Activated CD4-positive, alpha-beta T cell treated with anti-CD3 and anti-CD28 coated beads, Interleukin-2, amount 10 ng/mL, durations not matched to agents 24 days and 14 days (primary cell): ENCODE measurements at regions of chr4 and their contacts with region 1.

Region 1: GRCh38 chr4:127965062-127965802 is at the starts of genes ABHD18 and MFSD8:
- DNase-seq: peak; percentile 100
- H3K4me3 Mint-ChIP-seq: peak within 1 kb of the TSS; percentile 97
- H3K27ac Mint-ChIP-seq: peak within 1 kb of the TSS; percentile 97
- H3K4me1 Mint-ChIP-seq: peaks cover 31% of the 10 kb centered on the region
- H3K27me3 Mint-ChIP-seq: peaks cover 2% of the 10 kb centered on the region
- total RNA-seq, gene ABHD18: 17.3 and 18.5 TPM in 2 replicates
- total RNA-seq, gene MFSD8: 21.5 and 21.8 TPM in 2 replicates

Region 2: GRCh38 chr4:127782274-127783025 is 182.8 kb before region 1 on chr4 and contains the start of gene HSPA4L:
- intact Hi-C with region 1: loop called (anchors 1 kb)
- DNase-seq: peak; percentile 89
- H3K4me3 Mint-ChIP-seq: peak within 1 kb of the TSS; percentile 94
- H3K27ac Mint-ChIP-seq: peak within 1 kb of the TSS; percentile 91
- H3K4me1 Mint-ChIP-seq: peaks cover 18% of the 10 kb centered on the region
- H3K27me3 Mint-ChIP-seq: peaks cover 72% of the 10 kb centered on the region
- total RNA-seq, gene HSPA4L: 1.3 and 1.7 TPM in 2 replicates

Region 3: DNA sequence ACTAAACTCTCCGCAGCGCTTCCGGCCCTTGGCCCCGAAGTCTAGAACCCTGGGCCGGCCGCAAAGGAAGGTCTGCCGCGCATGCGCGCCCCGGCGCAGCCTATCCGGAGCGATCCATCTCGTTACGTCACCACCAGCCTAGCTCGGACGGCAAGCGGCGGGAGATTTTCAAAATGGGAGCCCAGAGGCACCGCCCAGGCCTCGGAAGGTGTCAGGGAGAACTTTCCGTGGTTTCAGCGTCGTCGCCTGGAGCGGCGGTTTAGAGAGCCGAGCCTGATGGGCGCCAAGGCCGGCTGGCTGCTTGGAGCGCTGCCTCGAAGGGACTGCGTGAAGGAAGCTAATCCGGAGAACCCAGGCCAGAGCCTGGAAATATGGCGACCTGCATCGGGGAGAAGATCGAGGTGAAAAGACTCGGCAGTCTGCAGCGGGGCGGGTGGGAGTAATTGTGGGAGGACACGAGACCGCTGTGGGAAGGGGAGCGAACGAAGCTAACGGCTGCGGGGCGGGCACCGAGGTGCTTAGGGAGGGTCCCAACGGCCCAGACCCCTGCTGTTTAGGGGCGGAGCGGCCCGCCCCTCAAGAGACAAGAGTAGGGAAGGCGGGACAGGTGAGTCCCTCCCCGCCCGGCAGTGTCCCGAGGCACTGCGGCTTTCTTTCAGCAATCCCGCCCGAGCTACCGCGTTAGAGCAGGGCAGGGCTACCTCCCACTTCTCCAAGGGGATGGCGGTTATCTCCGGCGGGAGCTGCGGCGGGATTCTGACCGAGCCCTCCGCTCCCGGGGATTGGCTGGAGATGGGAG is 84.3 kb before region 1 on chr4 and contains the start of gene PLK4:
- intact Hi-C with region 1: loop called (anchors 1 kb)
- DNase-seq: peak; percentile 99
- H3K4me3 Mint-ChIP-seq: peak within 1 kb of the TSS; percentile 97
- H3K27ac Mint-ChIP-seq: peak within 1 kb of the TSS; percentile 93
- H3K4me1 Mint-ChIP-seq: peaks cover 25% of the 10 kb centered on the region
- H3K27me3 Mint-ChIP-seq: peaks cover 2% of the 10 kb centered on the region
- total RNA-seq, gene PLK4: 44.5 and 44.7 TPM in 2 replicates

Region 4: GRCh38 chr4:127905029-127905428 is 60.2 kb before region 1 on chr4:
- intact Hi-C with region 1: no loop called
- DNase-seq: peak; percentile 31
- H3K4me3 Mint-ChIP-seq: no peak overlapping the region
- H3K27ac Mint-ChIP-seq: no peak overlapping the region
- H3K4me1 Mint-ChIP-seq: no peaks in the 10 kb centered on the region
- H3K27me3 Mint-ChIP-seq: no peaks in the 10 kb centered on the region

Region 5: DNA sequence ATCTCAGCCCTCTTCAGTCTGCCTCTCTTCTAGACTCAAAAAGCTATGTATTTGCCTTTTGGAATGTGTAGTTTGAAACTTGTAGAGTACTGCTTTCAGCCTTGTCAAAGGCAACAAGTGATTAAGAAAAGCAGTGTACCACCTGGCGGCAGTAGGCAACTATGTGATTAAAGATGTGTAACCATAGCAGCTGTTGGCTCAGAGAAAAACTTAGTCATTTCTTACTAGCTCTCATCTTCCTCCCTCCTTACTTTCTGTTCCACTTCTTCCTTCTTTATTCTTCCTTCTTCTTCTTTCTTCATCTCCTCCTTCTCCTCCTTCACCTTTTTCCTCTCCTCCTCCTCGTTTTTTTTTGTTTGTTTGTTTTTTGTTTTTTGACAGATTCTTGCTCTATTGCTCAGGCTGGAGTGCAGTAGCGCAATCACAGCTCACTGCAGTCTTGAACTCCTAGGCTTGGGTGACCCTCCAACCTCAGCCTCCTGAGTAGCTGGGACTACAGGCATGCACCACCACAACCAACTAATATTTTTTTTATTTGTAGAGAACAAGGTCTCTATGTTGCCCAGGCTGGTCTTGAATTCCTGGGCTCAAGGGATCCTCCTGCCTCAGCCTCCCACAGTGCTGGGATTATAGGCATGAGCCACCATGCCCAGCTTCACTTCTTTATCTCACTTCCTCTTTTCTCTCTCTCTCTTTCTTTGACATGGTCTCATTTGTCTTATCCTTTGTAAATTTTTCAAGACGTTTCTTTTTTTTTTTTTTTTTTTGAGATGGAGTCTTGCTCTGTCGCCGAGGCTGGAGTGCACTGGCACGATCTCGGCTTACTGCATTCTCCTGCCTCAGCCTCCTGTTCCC is 32.5 kb after region 1 on chr4:
- intact Hi-C with region 1: loop called (anchors 2 kb)
- DNase-seq: peak; percentile 68
- H3K4me3 Mint-ChIP-seq: no peak overlapping the region
- H3K27ac Mint-ChIP-seq: peak overlapping the region; percentile 65
- H3K4me1 Mint-ChIP-seq: peaks cover 21% of the 10 kb centered on the region
- H3K27me3 Mint-ChIP-seq: no peaks in the 10 kb centered on the region

Region 6: GRCh38 chr4:128060699-128061565 is 95.7 kb after region 1 on chr4 and contains the start of gene LARP1B:
- intact Hi-C with region 1: loop called (anchors 1 kb)
- DNase-seq: peak; percentile 98
- H3K4me3 Mint-ChIP-seq: peak within 1 kb of the TSS; percentile 90
- H3K27ac Mint-ChIP-seq: peak within 1 kb of the TSS; percentile 94
- H3K4me1 Mint-ChIP-seq: peaks cover 11% of the 10 kb centered on the region
- H3K27me3 Mint-ChIP-seq: peaks cover 3% of the 10 kb centered on the region
- total RNA-seq, gene LARP1B: 31.1 and 32.6 TPM in 2 replicates

Region 7: DNA sequence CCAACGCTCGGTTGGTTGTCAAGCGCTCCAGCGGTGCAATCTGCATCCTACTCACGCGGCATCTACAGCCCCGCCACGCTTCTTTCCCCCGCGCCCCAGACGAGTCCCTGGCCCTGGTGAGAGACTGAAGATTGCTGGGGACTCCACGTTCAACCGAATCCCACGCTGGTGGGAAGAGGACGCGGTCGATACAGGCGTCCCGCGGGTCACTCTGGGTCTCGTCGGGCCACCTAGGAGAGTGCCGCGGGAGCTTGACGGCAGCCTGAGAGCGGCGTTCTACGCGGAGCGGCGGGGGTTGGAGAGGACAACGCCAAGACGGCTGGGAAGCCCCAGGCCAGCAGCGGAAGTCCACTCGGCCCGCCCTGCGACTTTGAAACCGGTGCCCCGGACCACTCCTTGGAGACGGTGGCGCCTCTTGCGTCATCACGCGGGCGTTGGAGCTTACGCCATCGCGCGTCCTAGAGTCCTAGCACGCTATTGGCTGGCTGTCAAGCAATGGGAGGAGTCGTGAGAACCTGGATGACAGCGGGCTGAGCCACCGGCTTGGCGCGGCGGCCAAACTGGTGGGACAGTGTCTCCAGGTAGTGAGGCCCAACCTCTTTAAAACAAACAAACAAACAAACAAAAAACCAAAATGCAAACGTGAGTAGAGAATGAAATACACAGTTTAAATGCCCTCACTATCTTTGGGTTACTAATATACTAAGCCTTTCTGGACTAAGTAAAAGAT is 1128.1 kb after region 1 on chr4 and contains the start of gene SCLT1:
- intact Hi-C with region 1: loop called (anchors 1 kb)
- DNase-seq: peak; percentile 99
- H3K4me3 Mint-ChIP-seq: peak within 1 kb of the TSS; percentile 53
- H3K27ac Mint-ChIP-seq: peak within 1 kb of the TSS; percentile 31
- H3K4me1 Mint-ChIP-seq: peaks cover 42% of the 10 kb centered on the region
- H3K27me3 Mint-ChIP-seq: no peaks in the 10 kb centered on the region
- total RNA-seq, gene SCLT1: 24.2 and 25.4 TPM in 2 replicates